Transverse colon (tissue), 4 donors: ENCODE measurements at regions of chr6 and their contacts with region 1.

Region 1: GRCh38 chr6:158358450-158359077 is 46.3 kb downstream of the TULP4 start:
- DNase-seq: peak; percentile 46
- H3K4me3 ChIP-seq: no peak overlapping the region
- H3K27ac ChIP-seq: no peak overlapping the region
- H3K4me1 ChIP-seq: peaks cover 0 to 21% (median 8%) of the 10 kb centered on the region in 4 donors
- H3K27me3 ChIP-seq: no peaks in the 10 kb centered on the region
- CTCF ChIP-seq: no peak
- EP300 ChIP-seq: no peak
- POLR2A ChIP-seq: no peak

Region 2: DNA sequence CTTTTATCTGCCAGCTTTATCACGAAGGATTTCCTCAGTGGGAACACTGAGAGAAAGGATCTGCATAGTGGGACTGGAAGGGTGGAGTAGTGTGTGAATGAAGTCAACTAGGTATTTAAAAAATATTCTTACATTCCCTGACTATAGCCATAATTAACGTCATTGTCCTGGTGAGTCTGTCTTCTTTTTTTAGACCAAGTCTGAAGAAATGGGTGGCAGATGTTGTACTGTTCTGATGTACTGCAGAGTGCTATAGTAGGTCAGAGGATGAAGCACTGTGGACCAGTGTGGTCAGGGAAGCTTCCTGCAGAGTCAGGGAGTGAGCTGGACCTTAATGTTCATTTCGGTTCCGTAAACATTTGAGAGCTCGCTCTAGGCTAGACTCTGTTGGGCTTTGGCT is 34.4 kb before region 1 on chr6:
- in situ Hi-C with region 1: no loop called
- intact Hi-C with region 1: loop called (anchors 1 kb)
- DNase-seq: no peak
- H3K4me3 ChIP-seq: no peak overlapping the region
- H3K27ac ChIP-seq: no peak overlapping the region
- H3K4me1 ChIP-seq: peaks cover 15 to 52% (median 32%) of the 10 kb centered on the region in 4 donors
- H3K27me3 ChIP-seq: no peaks in the 10 kb centered on the region
- CTCF ChIP-seq: no peak
- EP300 ChIP-seq: no peak
- POLR2A ChIP-seq: no peak